Activated B cell treated with CpG ODN at 0.5 μM for 24 hours (primary cell): ENCODE measurements at regions of chr2 and their contacts with region 1.

Region 1: DNA sequence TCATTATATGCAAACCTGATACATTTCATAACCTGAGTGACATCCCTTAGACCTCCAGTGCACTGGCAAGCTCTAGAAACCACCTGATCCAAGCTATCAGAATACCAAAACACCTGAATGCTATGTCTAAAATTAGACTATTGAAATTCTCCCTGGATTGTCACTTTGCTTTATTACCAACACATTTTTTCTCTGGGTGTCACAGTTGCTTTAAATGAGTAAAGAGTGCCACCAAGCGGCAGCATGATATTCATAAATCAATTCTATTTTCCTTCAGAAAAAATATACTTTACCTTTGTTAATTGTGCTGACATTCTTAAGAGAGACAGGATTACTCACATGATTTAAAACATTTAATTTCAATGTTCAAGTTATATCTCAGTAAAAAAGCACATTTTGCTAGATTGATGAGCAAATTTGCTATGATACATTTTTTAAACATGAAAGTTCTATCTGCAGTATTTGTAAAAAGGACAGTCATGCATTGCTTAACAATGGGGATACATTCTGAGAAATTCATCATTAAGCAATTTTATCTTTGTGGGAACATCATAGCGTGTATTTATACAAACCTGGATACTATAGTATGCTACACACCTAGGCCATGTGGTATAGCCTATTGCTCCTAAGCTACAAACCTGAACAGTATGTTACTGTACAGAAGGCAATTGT is 338.4 kb upstream of the SLC39A10 start:
- DNase-seq: no peak
- ATAC-seq: no peak
- H3K4me3 Mint-ChIP-seq: no peak overlapping the region
- H3K27ac Mint-ChIP-seq: no peak overlapping the region
- H3K4me1 Mint-ChIP-seq: peaks cover 2% of the 10 kb centered on the region
- H3K27me3 Mint-ChIP-seq: no peaks in the 10 kb centered on the region
- CTCF ChIP-seq: peak; percentile 81

Region 2: DNA sequence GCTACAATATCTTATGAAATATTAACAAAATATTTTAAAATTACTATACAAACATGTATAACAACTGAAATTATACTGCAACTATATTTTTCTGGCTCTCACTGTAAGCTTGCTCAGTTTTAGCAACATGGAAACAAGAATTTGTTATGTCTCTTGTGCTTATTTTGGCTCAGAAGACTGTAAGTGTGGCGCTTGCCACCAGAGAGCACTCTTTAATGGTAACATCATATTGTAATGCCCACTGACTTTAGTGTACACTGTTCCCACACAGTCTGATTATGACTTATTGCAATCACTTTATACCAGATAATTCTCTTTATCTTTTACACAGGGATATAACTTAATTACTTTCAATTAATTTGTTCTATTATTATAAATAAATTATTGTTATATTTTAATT is 1623.2 kb before region 1 on chr2:
- CTCF ChIA-PET with region 1: no interaction called
- POLR2A ChIA-PET with region 1: no interaction called
- intact Hi-C with region 1: loop called (anchors 2 kb)
- DNase-seq: no peak
- ATAC-seq: no peak
- H3K4me3 Mint-ChIP-seq: no peak overlapping the region
- H3K27ac Mint-ChIP-seq: no peak overlapping the region
- H3K4me1 Mint-ChIP-seq: no peaks in the 10 kb centered on the region
- H3K27me3 Mint-ChIP-seq: no peaks in the 10 kb centered on the region
- CTCF ChIP-seq: no peak

Region 3: DNA sequence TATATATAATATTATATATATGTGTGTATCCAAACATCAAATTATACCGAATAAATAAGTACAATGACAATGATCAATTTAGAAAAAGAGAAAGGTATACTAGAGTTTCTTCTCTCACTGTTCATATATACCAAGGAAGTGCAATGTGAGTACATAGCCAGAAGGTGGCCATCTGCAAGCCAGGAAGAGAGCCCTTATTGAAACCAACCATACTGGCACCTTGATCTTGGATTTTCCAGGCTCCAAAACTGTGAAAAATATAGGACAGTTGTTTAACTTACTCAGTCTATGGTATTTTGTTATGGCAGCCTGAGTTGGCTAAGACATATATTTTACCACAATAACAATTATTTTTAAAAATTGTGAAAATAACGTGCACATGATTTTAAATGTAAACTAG is 1151.8 kb before region 1 on chr2:
- CTCF ChIA-PET with region 1: no interaction called
- POLR2A ChIA-PET with region 1: no interaction called
- intact Hi-C with region 1: loop called (anchors 1 kb)
- DNase-seq: no peak
- ATAC-seq: no peak
- H3K4me3 Mint-ChIP-seq: no peak overlapping the region
- H3K27ac Mint-ChIP-seq: no peak overlapping the region
- H3K4me1 Mint-ChIP-seq: no peaks in the 10 kb centered on the region
- H3K27me3 Mint-ChIP-seq: no peaks in the 10 kb centered on the region
- CTCF ChIP-seq: no peak

Region 4: DNA sequence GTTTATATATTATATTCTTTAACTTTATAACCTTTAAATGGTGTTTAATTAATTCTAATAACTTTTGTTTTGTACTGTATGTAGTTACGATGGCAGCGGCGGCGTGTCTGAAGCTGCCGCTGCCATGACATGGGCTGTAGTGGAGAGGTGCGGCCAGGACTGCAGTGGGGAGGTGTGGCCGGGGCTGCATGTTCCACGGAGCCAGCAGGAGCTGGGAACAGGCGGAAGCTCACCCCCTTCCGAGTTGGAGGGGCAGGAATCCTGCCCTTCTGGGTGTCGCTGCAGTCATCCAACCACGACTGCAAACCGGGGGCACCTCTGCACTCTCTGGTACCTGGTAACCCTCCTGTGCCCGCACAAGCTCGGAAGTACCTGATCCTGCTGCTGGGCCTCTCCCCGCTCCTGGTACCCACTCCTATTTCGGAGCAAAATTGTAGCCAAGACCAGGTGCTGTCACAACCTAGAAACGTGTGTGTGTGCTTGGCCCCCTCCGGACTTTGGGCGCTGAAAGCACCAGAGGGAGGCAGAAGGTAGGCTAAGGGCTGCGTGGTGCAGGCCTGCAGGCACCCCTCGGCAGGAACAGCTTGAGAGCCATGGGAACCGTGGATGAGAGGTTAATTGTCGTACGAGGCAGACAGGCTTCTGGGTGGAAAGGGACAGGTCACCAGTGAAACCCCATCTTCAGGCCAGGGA is 991.2 kb before region 1 on chr2:
- CTCF ChIA-PET with region 1: no interaction called
- POLR2A ChIA-PET with region 1: no interaction called
- intact Hi-C with region 1: loop called (anchors 5 kb)
- DNase-seq: no peak
- ATAC-seq: no peak
- H3K4me3 Mint-ChIP-seq: no peak overlapping the region
- H3K27ac Mint-ChIP-seq: no peak overlapping the region
- H3K4me1 Mint-ChIP-seq: no peaks in the 10 kb centered on the region
- H3K27me3 Mint-ChIP-seq: no peaks in the 10 kb centered on the region
- CTCF ChIP-seq: no peak

Region 5: GRCh38 chr2:194545978-194546377 is 772.6 kb before region 1 on chr2:
- CTCF ChIA-PET with region 1: no interaction called
- POLR2A ChIA-PET with region 1: no interaction called
- intact Hi-C with region 1: loop called (anchors 5 kb)
- DNase-seq: no peak
- ATAC-seq: no peak
- H3K4me3 Mint-ChIP-seq: no peak overlapping the region
- H3K27ac Mint-ChIP-seq: no peak overlapping the region
- H3K4me1 Mint-ChIP-seq: no peaks in the 10 kb centered on the region
- H3K27me3 Mint-ChIP-seq: no peaks in the 10 kb centered on the region
- CTCF ChIP-seq: no peak